IMR-90 (cell line): ENCODE measurements at regions of chr4 and their contacts with region 1.

Region 1: GRCh38 chr4:20684852-20685763 is 15.2 kb upstream of the PACRGL start:
- DNase-seq: peak; percentile 27
- ATAC-seq: peak; percentile 27; the same call in 1 of the 2 replicates
- H3K4me3 ChIP-seq: no peak overlapping the region
- H3K27ac ChIP-seq: no peak overlapping the region
- H3K4me1 ChIP-seq: no peaks in the 10 kb centered on the region
- H3K27me3 ChIP-seq: peaks cover 5% of the 10 kb centered on the region
- CTCF ChIP-seq: peak; percentile 73
- POLR2A ChIP-seq: no peak
- RAD21 ChIP-seq: peak; percentile 73

Region 2: GRCh38 chr4:18689308-18690115 is 1995.6 kb before region 1 on chr4:
- CTCF ChIA-PET with region 1: no interaction called
- POLR2A ChIA-PET with region 1: no interaction called
- dilution Hi-C with region 1: no loop called
- in situ Hi-C with region 1: loop called (anchors 10 kb)
- intact Hi-C with region 1: loop called (anchors 2 kb)
- DNase-seq: peak; percentile 66
- ATAC-seq: peak; percentile 74; the same call in 1 of the 2 replicates
- H3K4me3 ChIP-seq: no peak overlapping the region
- H3K27ac ChIP-seq: no peak overlapping the region
- H3K4me1 ChIP-seq: no peaks in the 10 kb centered on the region
- H3K27me3 ChIP-seq: no peaks in the 10 kb centered on the region
- CTCF ChIP-seq: peak; percentile 82
- POLR2A ChIP-seq: no peak
- RAD21 ChIP-seq: peak; percentile 89

Region 3: DNA sequence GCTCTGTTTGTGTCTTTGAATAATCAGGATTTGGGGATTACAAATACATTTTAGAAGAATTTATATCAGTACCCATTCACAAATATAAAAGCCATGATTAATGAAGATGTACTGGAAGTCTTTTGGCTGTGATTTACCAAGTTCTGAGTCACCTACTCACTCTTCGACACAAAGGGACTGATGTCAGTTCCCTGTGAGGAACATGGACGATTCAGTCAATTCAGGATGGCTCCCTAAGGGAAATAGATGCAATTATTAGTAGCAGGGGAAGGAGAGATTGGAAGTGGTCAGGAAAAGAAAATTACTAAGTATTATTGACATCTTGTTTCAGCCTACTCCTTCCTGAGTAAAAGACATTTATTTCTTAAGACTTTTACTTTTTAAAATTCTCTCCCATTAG is 984.1 kb before region 1 on chr4:
- CTCF ChIA-PET with region 1: no interaction called
- POLR2A ChIA-PET with region 1: no interaction called
- dilution Hi-C with region 1: no loop called
- in situ Hi-C with region 1: no loop called
- intact Hi-C with region 1: loop called (anchors 5 kb)
- DNase-seq: peak; percentile 24
- ATAC-seq: no peak
- H3K4me3 ChIP-seq: no peak overlapping the region
- H3K27ac ChIP-seq: no peak overlapping the region
- H3K4me1 ChIP-seq: no peaks in the 10 kb centered on the region
- H3K27me3 ChIP-seq: no peaks in the 10 kb centered on the region
- CTCF ChIP-seq: no peak
- POLR2A ChIP-seq: no peak
- RAD21 ChIP-seq: no peak

Region 4: GRCh38 chr4:20299515-20299914 is 385.6 kb before region 1 on chr4:
- CTCF ChIA-PET with region 1: interaction called, 3 read pairs
- POLR2A ChIA-PET with region 1: no interaction called
- dilution Hi-C with region 1: no loop called
- in situ Hi-C with region 1: loop called (anchors 10 kb)
- intact Hi-C with region 1: loop called (anchors 2 kb)
- DNase-seq: peak; percentile 41
- ATAC-seq: no peak; the same call in 1 of the 2 replicates
- H3K4me3 ChIP-seq: no peak overlapping the region
- H3K27ac ChIP-seq: no peak overlapping the region
- H3K4me1 ChIP-seq: no peaks in the 10 kb centered on the region
- H3K27me3 ChIP-seq: no peaks in the 10 kb centered on the region
- CTCF ChIP-seq: peak; percentile 57
- POLR2A ChIP-seq: no peak
- RAD21 ChIP-seq: peak; percentile 42

Region 5: DNA sequence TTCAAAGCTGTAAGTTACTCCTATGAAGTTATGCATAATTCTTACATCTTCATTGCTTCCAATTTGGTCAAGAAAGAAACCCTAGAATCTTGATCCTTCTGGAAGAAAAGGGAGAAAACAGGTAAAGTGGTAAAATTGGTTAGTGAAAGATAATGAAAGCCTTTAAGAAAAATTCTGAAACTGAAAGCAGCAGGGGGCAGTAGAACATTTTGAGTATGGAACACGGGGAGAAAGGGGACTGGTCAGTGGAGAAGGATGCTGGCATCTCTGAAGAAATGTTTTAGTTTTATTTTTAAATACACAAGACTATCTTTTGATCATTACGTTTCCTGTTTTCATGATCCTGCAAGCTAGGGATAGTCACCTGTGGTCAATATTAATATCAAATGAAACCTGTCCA is 379.1 kb before region 1 on chr4:
- CTCF ChIA-PET with region 1: interaction called, 3 read pairs
- POLR2A ChIA-PET with region 1: no interaction called
- dilution Hi-C with region 1: no loop called
- in situ Hi-C with region 1: loop called (anchors 10 kb)
- intact Hi-C with region 1: loop called (anchors 2 kb)
- DNase-seq: peak; percentile 59
- ATAC-seq: peak; percentile 65
- H3K4me3 ChIP-seq: no peak overlapping the region
- H3K27ac ChIP-seq: no peak overlapping the region
- H3K4me1 ChIP-seq: no peaks in the 10 kb centered on the region
- H3K27me3 ChIP-seq: no peaks in the 10 kb centered on the region
- CTCF ChIP-seq: peak; percentile 54
- POLR2A ChIP-seq: no peak
- RAD21 ChIP-seq: peak; percentile 47

Region 6: GRCh38 chr4:20422398-20422797 is 262.7 kb before region 1 on chr4:
- CTCF ChIA-PET with region 1: interaction called, 3 read pairs
- POLR2A ChIA-PET with region 1: no interaction called
- dilution Hi-C with region 1: no loop called
- in situ Hi-C with region 1: loop called (anchors 5 kb)
- intact Hi-C with region 1: loop called (anchors 2 kb)
- DNase-seq: peak; percentile 52
- ATAC-seq: peak; percentile 72
- H3K4me3 ChIP-seq: no peak overlapping the region
- H3K27ac ChIP-seq: no peak overlapping the region
- H3K4me1 ChIP-seq: no peaks in the 10 kb centered on the region
- H3K27me3 ChIP-seq: no peaks in the 10 kb centered on the region
- CTCF ChIP-seq: peak; percentile 62
- POLR2A ChIP-seq: no peak
- RAD21 ChIP-seq: peak; percentile 61

Region 7: DNA sequence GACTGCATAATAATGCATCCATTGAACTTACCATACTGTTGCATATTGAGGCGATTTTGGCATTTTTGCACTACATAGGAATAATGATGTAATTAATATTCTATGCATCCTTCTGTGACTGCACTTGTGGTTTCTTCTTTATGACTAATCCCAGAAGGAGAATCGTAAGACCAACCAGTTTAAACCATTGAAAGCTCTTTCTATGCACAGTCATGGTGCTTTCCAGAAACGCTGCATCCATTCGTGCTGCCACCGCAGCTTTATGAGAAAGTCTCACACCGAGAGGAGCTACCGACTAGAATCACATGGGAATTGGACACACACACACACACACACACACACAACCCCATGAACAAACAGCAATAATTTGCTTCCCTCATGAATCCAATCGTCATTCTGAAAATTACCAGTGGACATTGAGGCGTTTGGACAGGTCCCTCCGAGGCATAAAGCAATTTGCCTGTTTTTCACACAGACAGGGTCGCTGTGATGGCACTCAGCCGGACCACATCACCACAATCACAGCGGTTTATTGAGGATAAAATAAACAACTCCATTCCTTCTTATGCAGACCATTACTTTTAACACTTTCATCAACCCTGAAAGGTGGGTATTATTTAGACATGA is 79.4 kb after region 1 on chr4:
- CTCF ChIA-PET with region 1: interaction called, 11 read pairs
- POLR2A ChIA-PET with region 1: no interaction called
- dilution Hi-C with region 1: no loop called
- in situ Hi-C with region 1: no loop called
- intact Hi-C with region 1: no loop called
- DNase-seq: peak; percentile 28
- ATAC-seq: no peak
- H3K4me3 ChIP-seq: no peak overlapping the region
- H3K27ac ChIP-seq: no peak overlapping the region
- H3K4me1 ChIP-seq: no peaks in the 10 kb centered on the region
- H3K27me3 ChIP-seq: no peaks in the 10 kb centered on the region
- CTCF ChIP-seq: no peak
- POLR2A ChIP-seq: no peak
- RAD21 ChIP-seq: no peak